Naive thymus-derived CD4-positive, alpha-beta T cell (primary cell): ENCODE measurements at regions of chr14 and their contacts with region 1.

Region 1: GRCh38 chr14:50311975-50312733 is at the starts of genes DMAC2L and L2HGDH:
- DNase-seq: peak; percentile 80 to 95 (median 88)
- ATAC-seq: peak; percentile 94
- H3K4me3 ChIP-seq: peak within 1 kb of the TSS; percentile 88
- H3K4me3 Mint-ChIP-seq: peak within 1 kb of the TSS; percentile 86 to 99 (median 96)
- H3K27ac ChIP-seq: peak within 1 kb of the TSS; percentile 84
- H3K27ac Mint-ChIP-seq: peak within 1 kb of the TSS; percentile 95 to 99 (median 98)
- H3K4me1 ChIP-seq: peaks cover 11 to 12% of the 10 kb centered on the region in 2 donors
- H3K4me1 Mint-ChIP-seq: peaks cover 16 to 56% (median 46%) of the 10 kb centered on the region in 7 donors
- H3K27me3 ChIP-seq: no peaks in the 10 kb centered on the region
- H3K27me3 Mint-ChIP-seq: no peaks in the 10 kb centered on the region
- total RNA-seq, gene DMAC2L: 15.5 to 21.2 (median 16.7) TPM
- total RNA-seq, gene L2HGDH: 3.7 to 10.1 (median 4.8) TPM

Region 2: DNA sequence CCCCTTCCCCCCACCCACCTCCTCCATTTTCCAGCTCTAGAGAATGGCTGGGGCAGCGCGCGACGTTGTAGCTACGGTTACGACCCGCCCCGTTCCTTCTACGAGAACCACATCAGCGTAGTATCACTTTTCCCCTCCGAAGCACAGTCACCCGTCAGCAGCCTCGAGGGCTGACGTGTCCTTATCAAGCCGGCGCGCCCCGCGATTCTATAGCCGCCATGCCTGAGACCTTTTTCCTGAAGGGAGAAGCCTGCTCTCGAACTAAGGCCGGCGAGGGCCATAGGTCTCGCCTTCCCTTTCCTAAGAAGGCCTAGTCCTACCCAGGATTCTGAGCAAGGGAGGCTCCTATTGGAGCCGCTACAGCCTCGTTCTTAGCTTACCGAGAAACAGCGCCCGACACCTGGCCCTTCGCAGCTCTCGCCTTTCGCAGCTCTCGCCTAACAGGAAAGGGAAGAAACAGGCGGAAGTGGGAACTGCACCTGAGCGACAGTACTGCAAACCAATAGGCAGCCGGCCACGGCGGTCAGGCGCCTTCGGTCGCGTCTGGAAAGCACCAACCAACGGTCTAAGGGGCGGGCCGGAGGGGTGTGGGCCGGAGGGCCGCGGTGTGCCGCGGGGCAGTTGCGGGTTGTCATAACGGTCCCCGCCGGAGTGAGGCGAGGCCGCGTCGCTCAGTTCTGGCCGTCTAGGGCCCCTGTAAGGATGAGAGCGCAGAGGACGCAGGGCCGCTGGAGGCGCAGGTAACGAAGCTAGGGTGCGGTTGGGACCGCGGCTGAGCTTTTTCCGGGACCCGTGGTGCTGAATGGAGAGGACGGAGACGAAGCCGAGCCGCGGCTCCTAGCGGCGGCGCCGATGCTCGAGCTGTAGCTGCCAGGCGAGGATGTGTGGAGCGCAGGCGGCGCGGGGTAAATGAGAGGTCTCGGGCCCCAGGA is 691.7 kb before region 1 on chr14 and contains the starts of genes MGAT2 and RPL36AL:
- CTCF ChIA-PET with region 1: no interaction called
- POLR2A ChIA-PET with region 1: no interaction called
- intact Hi-C with region 1: loop called (anchors 1 to 5 kb)
- DNase-seq: peak; percentile 89 to 95 (median 94)
- ATAC-seq: peak; percentile 92
- H3K4me3 ChIP-seq: peak within 1 kb of the TSS; percentile 98
- H3K4me3 Mint-ChIP-seq: peak within 1 kb of the TSS; percentile 94 to 99 (median 98)
- H3K27ac ChIP-seq: peak within 1 kb of the TSS; percentile 97
- H3K27ac Mint-ChIP-seq: peak within 1 kb of the TSS; percentile 95 to 100 (median 99)
- H3K4me1 ChIP-seq: peaks cover 40 to 42% of the 10 kb centered on the region in 2 donors
- H3K4me1 Mint-ChIP-seq: peaks cover 36 to 75% (median 56%) of the 10 kb centered on the region in 7 donors
- H3K27me3 ChIP-seq: no peaks in the 10 kb centered on the region
- H3K27me3 Mint-ChIP-seq: no peaks in the 10 kb centered on the region
- total RNA-seq, gene MGAT2: 16.8 to 69.3 (median 35.1) TPM
- total RNA-seq, gene RPL36AL: 177 to 429 (median 281) TPM

Region 3: DNA sequence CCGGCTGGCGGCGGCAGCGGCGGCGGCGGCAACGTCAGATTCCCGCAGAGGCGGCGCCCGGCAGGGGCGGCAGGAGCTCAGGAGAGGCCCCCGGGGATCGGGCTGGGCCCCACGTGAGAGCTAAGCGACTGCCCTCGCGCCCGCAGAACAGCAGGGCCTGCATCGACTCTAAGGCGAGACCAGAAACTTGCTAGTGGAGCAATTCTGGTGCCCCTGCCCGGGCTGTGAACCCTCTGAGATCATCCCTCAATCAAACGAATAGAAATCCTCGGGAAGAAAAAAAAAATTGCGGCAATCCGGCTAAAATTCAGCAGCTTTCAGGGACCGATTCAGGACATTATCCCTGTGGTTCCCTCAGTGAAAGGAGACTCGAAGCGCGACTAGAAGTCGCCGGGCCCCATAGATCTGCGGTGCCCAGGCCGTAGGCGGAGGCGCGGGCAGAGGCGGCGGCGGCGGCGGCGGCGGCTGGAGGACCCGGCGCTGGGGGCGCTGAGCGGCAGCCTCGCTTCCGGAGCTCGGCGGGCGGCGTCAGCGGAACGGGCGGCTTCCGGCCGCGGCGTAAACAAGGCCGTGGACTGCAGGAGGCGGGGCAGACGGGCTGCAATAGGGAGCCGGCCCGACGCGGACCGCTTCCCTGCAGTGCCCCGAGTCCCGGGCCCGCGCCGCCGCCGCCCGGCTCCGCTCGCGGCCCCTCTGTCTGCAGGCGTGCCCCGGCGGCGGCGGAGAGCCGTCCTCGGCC is 544.4 kb before region 1 on chr14 and contains the start of gene KLHDC2:
- CTCF ChIA-PET with region 1: no interaction called
- POLR2A ChIA-PET with region 1: interaction called, 5 read pairs
- intact Hi-C with region 1: loop called (anchors 1 to 5 kb)
- DNase-seq: peak; percentile 84 to 94 (median 89)
- ATAC-seq: peak; percentile 88
- H3K4me3 ChIP-seq: peak within 1 kb of the TSS; percentile 62
- H3K4me3 Mint-ChIP-seq: peak within 1 kb of the TSS; percentile 95 to 99 (median 98)
- H3K27ac ChIP-seq: peak within 1 kb of the TSS; percentile 96
- H3K27ac Mint-ChIP-seq: peak within 1 kb of the TSS; percentile 98 to 100 (median 99)
- H3K4me1 ChIP-seq: peaks cover 26 to 27% of the 10 kb centered on the region in 2 donors
- H3K4me1 Mint-ChIP-seq: peaks cover 20 to 46% (median 40%) of the 10 kb centered on the region in 7 donors
- H3K27me3 ChIP-seq: no peaks in the 10 kb centered on the region
- H3K27me3 Mint-ChIP-seq: peaks cover 0 to 2% (median 0%) of the 10 kb centered on the region in 5 donors
- total RNA-seq, gene KLHDC2: 33.2 to 105 (median 84.7) TPM

Region 4: GRCh38 chr14:50231475-50232275 is 80.5 kb before region 1 on chr14 and contains the start of gene SOS2:
- CTCF ChIA-PET with region 1: no interaction called
- POLR2A ChIA-PET with region 1: interaction called, 4 read pairs
- intact Hi-C with region 1: loop called (anchors 1 kb)
- DNase-seq: peak; percentile 71 to 84 (median 80)
- ATAC-seq: peak; percentile 92
- H3K4me3 ChIP-seq: peak within 1 kb of the TSS; percentile 89
- H3K4me3 Mint-ChIP-seq: peak within 1 kb of the TSS; percentile 80 to 97 (median 91)
- H3K27ac ChIP-seq: peak within 1 kb of the TSS; percentile 81
- H3K27ac Mint-ChIP-seq: peak within 1 kb of the TSS; percentile 90 to 96 (median 95)
- H3K4me1 ChIP-seq: peaks cover 6 to 17% of the 10 kb centered on the region in 2 donors
- H3K4me1 Mint-ChIP-seq: peaks cover 19 to 47% (median 42%) of the 10 kb centered on the region in 7 donors
- H3K27me3 ChIP-seq: no peaks in the 10 kb centered on the region
- H3K27me3 Mint-ChIP-seq: no peaks in the 10 kb centered on the region
- total RNA-seq, gene SOS2: 19.7 to 49.6 (median 38.7) TPM

Region 5: GRCh38 chr14:50342221-50343078 is 30.3 kb after region 1 on chr14:
- CTCF ChIA-PET with region 1: no interaction called
- POLR2A ChIA-PET with region 1: no interaction called
- intact Hi-C with region 1: no loop called
- DNase-seq: peak in 7 of 9 donors; percentile 22 to 59 (median 39)
- ATAC-seq: peak; percentile 83
- H3K4me3 ChIP-seq: no peak overlapping the region
- H3K4me3 Mint-ChIP-seq: peak overlapping the region in 1 of 10 donors; percentile 59
- H3K27ac ChIP-seq: no peak overlapping the region
- H3K27ac Mint-ChIP-seq: peak overlapping the region in 2 of 9 donors; percentile 31 to 66
- H3K4me1 ChIP-seq: no peaks in the 10 kb centered on the region
- H3K4me1 Mint-ChIP-seq: peaks cover 0 to 23% (median 16%) of the 10 kb centered on the region in 7 donors
- H3K27me3 ChIP-seq: no peaks in the 10 kb centered on the region
- H3K27me3 Mint-ChIP-seq: peaks cover 0 to 11% (median 0%) of the 10 kb centered on the region in 5 donors

Region 6: GRCh38 chr14:50667996-50668825 is 356.1 kb after region 1 on chr14 and contains the start of gene SAV1:
- CTCF ChIA-PET with region 1: no interaction called
- POLR2A ChIA-PET with region 1: no interaction called
- intact Hi-C with region 1: loop called in 1 of 2 experiments (anchors 5 kb)
- DNase-seq: peak; percentile 18 to 65 (median 35)
- ATAC-seq: peak; percentile 59
- H3K4me3 ChIP-seq: peak within 1 kb of the TSS; percentile 84
- H3K4me3 Mint-ChIP-seq: peak within 1 kb of the TSS in 2 of 10 donors; percentile 92 to 95
- H3K27ac ChIP-seq: peak within 1 kb of the TSS; percentile 65
- H3K27ac Mint-ChIP-seq: peak within 1 kb of the TSS in 6 of 9 donors; percentile 54 to 94 (median 88)
- H3K4me1 ChIP-seq: peaks cover 0 to 10% of the 10 kb centered on the region in 2 donors
- H3K4me1 Mint-ChIP-seq: peaks cover 11 to 23% (median 20%) of the 10 kb centered on the region in 7 donors
- H3K27me3 ChIP-seq: no peaks in the 10 kb centered on the region
- H3K27me3 Mint-ChIP-seq: peaks cover 0 to 7% (median 0%) of the 10 kb centered on the region in 5 donors
- total RNA-seq, gene SAV1: 7.2 to 9.4 (median 8.7) TPM

Region 7: GRCh38 chr14:51239813-51240803 is 928.0 kb after region 1 on chr14 and contains the start of gene TMX1:
- CTCF ChIA-PET with region 1: no interaction called
- POLR2A ChIA-PET with region 1: no interaction called
- intact Hi-C with region 1: loop called in 1 of 2 experiments (anchors 1 kb)
- DNase-seq: peak; percentile 70 to 88 (median 82)
- ATAC-seq: peak; percentile 94
- H3K4me3 ChIP-seq: peak within 1 kb of the TSS; percentile 99
- H3K4me3 Mint-ChIP-seq: no peak within 1 kb of the TSS
- H3K27ac ChIP-seq: peak within 1 kb of the TSS; percentile 81
- H3K27ac Mint-ChIP-seq: no peak within 1 kb of the TSS
- H3K4me1 ChIP-seq: peaks cover 16 to 17% of the 10 kb centered on the region in 2 donors
- H3K4me1 Mint-ChIP-seq: peaks cover 0 to 29% (median 20%) of the 10 kb centered on the region in 7 donors
- H3K27me3 ChIP-seq: no peaks in the 10 kb centered on the region
- H3K27me3 Mint-ChIP-seq: no peaks in the 10 kb centered on the region
- total RNA-seq, gene TMX1: 13.3 to 48.3 (median 23.1) TPM